Heart left ventricle (tissue), 16 donors: ENCODE measurements at regions of chr6 and their contacts with region 1.

Region 1: DNA sequence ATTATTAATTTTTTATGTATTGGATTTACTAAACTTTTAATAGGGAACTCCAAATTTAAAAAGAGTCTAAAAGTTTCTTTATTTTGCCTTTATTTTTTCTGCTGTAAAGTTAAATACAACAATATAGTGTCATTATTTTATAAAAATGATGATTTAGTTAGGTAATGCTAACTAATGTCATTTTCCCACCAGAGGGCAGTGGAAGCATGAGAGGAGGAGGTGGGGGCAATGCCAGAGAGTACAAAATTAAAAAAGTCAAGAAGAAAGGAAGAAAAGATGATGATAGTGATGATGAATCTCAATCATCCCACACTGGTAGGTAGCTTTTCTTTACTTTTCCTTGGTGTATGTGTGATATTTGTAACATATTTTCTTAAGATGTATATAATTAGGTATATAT is 20.2 kb upstream of the FHL5 start:
- DNase-seq: no peak
- ATAC-seq: no peak
- H3K4me3 ChIP-seq: no peak overlapping the region
- H3K27ac ChIP-seq: no peak overlapping the region
- H3K4me1 ChIP-seq: no peaks in the 10 kb centered on the region
- H3K27me3 ChIP-seq: no peaks in the 10 kb centered on the region
- CTCF ChIP-seq: peak in 9 of 12 donors; percentile 9 to 56 (median 39)
- POLR2A ChIP-seq: no peak

Region 2: GRCh38 chr6:96626759-96627364 is 84.2 kb after region 1 on chr6:
- intact Hi-C with region 1: loop called in 1 of 10 experiments (anchors 5 kb)
- DNase-seq: no peak
- ATAC-seq: peak in 3 of 4 donors; percentile 42 to 69 (median 48)
- H3K4me3 ChIP-seq: no peak overlapping the region
- H3K27ac ChIP-seq: no peak overlapping the region
- H3K4me1 ChIP-seq: no peaks in the 10 kb centered on the region
- H3K27me3 ChIP-seq: no peaks in the 10 kb centered on the region
- CTCF ChIP-seq: peak; percentile 19 to 62 (median 42)
- POLR2A ChIP-seq: no peak

Region 3: DNA sequence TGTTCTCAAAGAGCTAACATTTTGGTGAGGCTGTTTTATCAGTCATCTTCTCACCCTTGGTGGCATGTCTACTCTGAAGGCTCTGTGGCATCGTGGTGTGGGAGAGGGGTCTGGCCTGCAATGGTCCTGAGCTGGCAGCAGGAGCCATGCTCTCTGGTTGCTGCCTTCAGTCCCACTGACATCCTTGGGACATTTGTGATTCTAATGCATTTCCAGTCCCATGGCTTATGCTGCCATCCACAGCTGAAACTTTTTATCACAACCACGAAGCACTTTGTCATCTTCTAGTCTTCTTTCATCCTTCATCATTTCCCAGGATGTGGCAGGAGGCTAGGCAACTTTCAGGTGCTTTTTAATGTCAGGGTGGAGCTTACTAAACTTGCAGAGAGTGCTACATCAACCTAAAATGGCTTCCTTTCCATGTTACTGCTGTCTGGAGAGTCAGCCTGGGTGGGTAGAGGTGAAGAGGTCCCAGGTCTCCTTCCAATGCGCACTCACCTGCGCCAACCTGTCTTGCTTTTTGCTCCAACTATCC is 217.5 kb after region 1 on chr6:
- intact Hi-C with region 1: loop called in 1 of 10 experiments (anchors 10 kb)
- DNase-seq: no peak
- ATAC-seq: no peak
- H3K4me3 ChIP-seq: no peak overlapping the region
- H3K27ac ChIP-seq: no peak overlapping the region
- H3K4me1 ChIP-seq: no peaks in the 10 kb centered on the region
- H3K27me3 ChIP-seq: peaks cover 0 to 3% (median 0%) of the 10 kb centered on the region in 9 donors
- CTCF ChIP-seq: peak in 5 of 12 donors; percentile 5 to 28 (median 22)
- POLR2A ChIP-seq: no peak

Region 4: DNA sequence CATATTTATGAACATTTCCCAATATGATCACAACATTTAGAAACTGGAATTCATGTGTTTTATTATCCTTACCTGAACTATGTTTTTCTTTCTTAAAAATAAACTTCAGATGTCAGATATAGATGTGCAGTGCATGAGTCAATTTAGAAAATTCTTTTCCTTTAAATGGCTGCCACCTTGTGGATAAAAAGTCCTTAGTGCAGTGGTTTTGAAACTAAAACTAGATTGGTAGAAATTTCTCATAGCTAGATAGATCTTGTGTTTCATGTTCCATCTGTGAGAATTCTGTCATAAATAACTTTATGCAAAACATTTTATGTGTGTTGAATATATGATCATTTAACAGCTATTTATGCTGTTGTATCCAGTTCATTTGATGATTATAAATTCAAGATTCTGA is 516.8 kb after region 1 on chr6:
- intact Hi-C with region 1: loop called in 2 of 10 experiments (anchors 10 kb)
- DNase-seq: no peak
- ATAC-seq: no peak
- H3K4me3 ChIP-seq: no peak overlapping the region
- H3K27ac ChIP-seq: no peak overlapping the region
- H3K4me1 ChIP-seq: no peaks in the 10 kb centered on the region
- H3K27me3 ChIP-seq: no peaks in the 10 kb centered on the region
- CTCF ChIP-seq: peak; percentile 19 to 63 (median 52)
- POLR2A ChIP-seq: no peak

Region 5: GRCh38 chr6:97068211-97068610 is 525.5 kb after region 1 on chr6:
- intact Hi-C with region 1: loop called in 1 of 10 experiments (anchors 10 kb)
- DNase-seq: no peak
- ATAC-seq: no peak
- H3K4me3 ChIP-seq: no peak overlapping the region
- H3K27ac ChIP-seq: no peak overlapping the region
- H3K4me1 ChIP-seq: no peaks in the 10 kb centered on the region
- H3K27me3 ChIP-seq: no peaks in the 10 kb centered on the region
- CTCF ChIP-seq: peak in 10 of 12 donors; percentile 17 to 62 (median 48)
- POLR2A ChIP-seq: no peak